Right ventricle myocardium inferior (tissue), 1 donor: ENCODE measurements at regions of chr3 and their contacts with region 1.

Region 1: DNA sequence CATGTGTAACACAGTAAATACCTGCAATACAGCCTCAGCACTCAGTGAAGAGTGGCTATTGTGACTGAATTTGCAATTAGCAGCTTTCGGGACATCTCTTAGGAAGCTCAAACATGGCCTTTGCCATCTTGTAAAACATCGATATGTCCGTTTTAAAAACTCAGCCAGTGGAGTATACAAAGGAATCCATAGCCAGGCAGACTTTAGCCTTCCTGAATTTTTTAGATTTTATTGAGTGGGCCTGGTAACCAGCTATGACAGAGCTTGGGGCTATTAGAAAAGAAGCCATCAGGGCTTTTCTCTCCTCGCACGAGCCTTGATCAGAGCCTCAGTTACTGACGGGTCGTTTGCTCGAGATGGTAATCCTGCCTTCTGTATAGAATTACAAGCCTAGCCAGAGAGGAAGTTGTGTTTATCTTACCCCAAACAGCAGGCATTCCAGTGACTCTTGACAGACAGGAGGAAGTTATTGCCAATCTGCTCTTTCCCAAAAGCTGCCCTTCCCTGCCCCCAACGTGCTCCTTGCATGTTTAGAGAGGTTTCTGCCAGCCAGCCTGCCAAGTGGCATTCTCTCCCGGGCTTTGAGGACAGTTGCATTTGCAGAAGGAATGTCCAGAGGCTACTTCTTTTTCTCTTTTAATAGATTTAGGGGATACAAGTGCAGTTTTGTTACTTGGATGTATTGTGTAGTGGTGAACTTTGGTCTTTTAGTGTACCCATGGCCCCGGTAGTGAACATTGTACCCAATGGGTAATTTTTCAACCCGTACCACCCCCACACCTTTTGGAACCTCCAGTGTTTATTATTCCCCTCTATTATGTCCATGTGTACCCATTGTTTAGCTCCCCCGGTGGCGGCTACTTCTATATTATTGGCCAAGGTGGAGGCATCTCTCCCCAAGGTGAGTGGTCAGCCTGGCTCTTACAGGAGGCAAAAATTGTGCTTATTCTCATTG is 40.6 kb downstream of the ITPR1 start:
- DNase-seq: peak; percentile 67
- ATAC-seq: peak; percentile 29

Region 2: DNA sequence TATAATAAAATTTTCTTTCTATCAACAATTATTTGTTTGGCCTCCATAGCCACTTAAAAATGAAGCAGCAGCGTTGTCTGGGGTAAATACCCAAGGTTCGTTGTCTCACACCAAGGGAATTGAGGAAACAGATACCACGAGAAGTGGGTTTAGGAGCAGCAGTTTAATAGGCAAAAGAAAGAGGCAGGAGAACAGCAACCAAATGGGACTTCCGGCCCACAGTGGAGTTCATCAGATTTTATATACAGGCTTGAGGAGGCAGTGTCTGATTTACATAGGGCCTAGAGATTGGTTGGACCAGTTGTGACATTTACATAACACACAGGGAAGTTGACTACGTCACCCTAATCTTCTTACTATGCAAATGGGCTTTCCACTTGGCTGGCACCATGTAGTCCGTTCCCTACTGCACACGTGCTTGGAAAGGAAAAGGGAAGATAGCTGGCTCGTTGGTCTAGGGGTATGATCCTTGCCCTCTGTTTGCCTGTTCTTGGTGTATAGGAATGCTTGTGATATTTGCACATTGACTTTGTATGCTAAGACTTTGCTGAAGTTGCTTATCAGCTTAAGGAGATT is 292.1 kb before region 1 on chr3:
- intact Hi-C with region 1: no loop called
- DNase-seq: no peak
- ATAC-seq: no peak

Region 3: DNA sequence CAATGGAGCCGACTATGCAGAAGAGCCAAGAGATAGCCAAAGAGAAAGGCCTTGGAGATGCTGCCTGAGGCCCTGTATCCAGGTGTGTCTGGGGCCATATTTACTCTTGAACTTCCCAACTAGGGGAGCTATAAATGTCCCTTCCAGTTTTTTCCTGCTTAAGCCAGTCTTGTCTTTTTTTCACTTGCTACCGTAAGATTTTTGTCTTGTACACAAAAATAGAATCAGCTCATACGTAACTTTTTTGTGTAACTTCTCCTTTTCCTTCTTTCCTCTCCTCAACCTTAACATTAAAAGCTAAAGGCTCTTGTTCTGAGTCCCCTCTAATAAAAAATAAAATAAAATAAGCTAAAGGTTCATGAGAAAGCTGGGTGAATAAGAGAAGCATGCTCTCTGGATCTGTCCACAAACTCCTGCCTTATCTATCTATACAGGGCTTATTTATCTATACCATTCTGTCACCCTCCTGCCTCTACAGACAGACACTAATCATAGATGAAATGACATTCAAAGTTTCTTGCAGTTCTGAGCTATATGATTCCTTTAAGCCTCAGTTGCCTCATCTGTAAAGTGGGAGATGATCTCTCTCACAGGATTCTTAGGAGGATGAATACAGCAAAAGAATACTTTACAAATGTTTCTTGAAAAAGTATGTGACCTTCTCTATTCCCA is 71.3 kb before region 1 on chr3:
- intact Hi-C with region 1: no loop called
- DNase-seq: no peak
- ATAC-seq: no peak

Region 4: DNA sequence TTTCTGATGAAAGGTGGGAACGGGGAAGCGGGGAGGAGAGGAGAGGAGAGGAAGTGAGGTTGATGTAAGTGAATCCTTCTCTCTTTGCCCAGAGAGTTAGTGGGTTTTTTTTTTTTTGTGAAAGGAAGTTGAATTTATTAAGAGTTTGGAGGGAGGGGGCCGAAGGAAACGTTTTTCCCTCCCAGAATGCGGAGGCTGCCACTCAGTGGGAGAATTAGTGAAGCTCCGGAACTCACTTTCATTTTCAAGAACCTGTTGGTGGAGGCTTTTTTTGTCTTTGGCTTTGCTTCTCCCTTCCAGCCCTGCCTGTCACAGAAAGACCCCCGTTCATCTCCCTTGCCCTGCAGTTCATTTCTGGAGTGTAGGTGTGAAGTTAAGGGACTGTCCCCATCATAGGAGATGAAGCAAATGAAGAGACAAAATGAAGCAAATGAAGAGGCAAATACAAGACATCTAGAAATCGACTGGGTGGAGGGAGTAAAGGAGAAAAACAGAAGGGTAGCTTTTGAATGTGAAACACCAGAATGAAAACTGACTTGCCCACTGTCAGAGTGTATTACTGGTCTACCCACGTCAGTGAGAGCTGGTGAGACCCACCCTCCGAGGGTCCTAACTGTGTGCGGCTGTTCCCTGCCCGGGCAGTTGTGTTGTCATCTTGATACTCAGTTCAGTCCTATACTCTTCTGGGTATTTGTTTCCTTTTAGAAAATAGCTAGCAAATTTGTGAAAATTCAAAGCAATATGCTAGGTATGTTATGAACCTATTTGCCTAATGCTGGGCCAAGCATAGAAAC is 50.9 kb after region 1 on chr3:
- intact Hi-C with region 1: loop called (anchors 5 kb)
- DNase-seq: no peak
- ATAC-seq: peak; percentile 12

Region 5: DNA sequence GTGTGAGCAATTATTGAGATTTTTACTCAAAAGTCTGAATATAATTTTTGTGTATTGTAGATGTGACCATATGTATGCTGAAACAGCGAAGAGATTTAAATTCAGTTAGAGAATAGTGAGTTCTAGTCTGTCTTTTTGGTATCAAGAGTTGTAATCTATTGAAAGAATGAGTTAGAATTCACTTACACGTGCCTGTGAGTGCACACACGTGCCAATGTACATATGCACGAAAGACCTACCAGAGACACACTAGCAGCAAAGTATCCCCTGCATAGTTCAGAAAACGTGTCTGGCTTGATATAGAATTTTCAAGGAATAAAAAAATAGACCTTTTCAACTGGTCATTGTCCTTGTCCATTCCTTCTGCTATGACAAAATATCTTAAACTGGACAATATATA is 380.7 kb after region 1 on chr3:
- intact Hi-C with region 1: no loop called
- DNase-seq: no peak
- ATAC-seq: no peak

Region 6: DNA sequence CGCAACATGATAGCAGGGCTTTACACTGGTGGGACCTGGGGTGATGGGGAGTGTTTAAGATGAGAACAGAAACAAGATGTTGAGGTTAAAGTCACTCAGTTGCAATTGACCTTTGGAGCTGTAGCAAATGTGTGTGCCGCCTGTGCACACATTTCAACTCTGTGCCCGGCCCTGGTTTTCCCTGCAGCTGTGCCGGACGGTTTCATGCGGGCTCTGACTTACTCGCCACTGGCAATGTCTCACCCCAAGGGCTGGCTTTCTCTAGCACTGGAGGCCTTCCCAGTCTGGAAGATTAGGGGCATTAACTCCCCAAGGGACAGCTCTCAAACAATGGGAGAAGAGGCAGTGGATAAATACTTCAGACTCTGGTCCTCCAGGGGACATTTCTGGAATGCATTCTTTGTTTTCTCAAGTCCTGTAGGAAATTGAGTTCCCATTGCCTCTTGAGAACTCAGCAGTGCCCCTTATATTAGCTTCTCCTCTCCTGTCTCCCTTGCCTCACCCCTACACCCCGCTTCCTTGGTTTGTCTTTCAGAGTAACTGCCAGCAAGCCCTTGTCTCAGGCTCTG is 806.3 kb after region 1 on chr3:
- intact Hi-C with region 1: no loop called
- DNase-seq: no peak
- ATAC-seq: no peak